Activated CD4-positive, alpha-beta T cell treated with anti-CD3 and anti-CD28 coated beads, Interleukin-2, amount 10 ng/mL, durations not matched to agents 24 days and 14 days (primary cell): ENCODE measurements at regions of chr3 and their contacts with region 1.

Region 1: GRCh38 chr3:188389711-188390342 is 235.9 kb downstream of the LPP start:
- DNase-seq: peak; percentile 84
- H3K4me3 Mint-ChIP-seq: peak overlapping the region; percentile 49
- H3K27ac Mint-ChIP-seq: peak overlapping the region; percentile 90
- H3K4me1 Mint-ChIP-seq: peaks cover 42% of the 10 kb centered on the region
- H3K27me3 Mint-ChIP-seq: no peaks in the 10 kb centered on the region

Region 2: GRCh38 chr3:188339410-188340295 is 50.2 kb before region 1 on chr3:
- intact Hi-C with region 1: loop called (anchors 1 kb)
- DNase-seq: peak; percentile 81
- H3K4me3 Mint-ChIP-seq: peak overlapping the region; percentile 66
- H3K27ac Mint-ChIP-seq: peak overlapping the region; percentile 93
- H3K4me1 Mint-ChIP-seq: peaks cover 34% of the 10 kb centered on the region
- H3K27me3 Mint-ChIP-seq: peaks cover 6% of the 10 kb centered on the region

Region 3: DNA sequence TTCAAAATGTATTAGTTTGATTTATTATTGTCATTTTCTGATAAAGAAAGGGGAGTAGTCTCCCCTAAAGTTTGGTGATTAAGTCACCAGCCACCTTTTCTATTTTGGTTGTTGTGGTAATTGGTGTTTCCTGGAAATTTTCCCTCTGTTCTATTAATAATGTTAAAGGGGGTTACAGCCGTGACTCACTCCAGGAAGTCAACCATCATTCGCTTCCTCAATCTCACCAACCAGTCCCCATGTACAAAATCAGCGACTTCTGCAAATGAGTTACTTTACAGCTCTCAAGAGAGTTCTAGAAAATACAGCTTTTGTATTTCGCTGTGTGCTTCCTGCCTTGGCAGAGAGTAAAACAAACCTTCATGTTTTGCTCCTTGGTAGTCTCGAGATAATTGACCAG is 49.3 kb after region 1 on chr3:
- intact Hi-C with region 1: loop called (anchors 2 kb)
- DNase-seq: peak; percentile 79
- H3K4me3 Mint-ChIP-seq: peak overlapping the region; percentile 55
- H3K27ac Mint-ChIP-seq: peak overlapping the region; percentile 91
- H3K4me1 Mint-ChIP-seq: peaks cover 43% of the 10 kb centered on the region
- H3K27me3 Mint-ChIP-seq: no peaks in the 10 kb centered on the region